ENCODE measurements at regions of chr7 and their contacts with region 1.

Region 1: DNA sequence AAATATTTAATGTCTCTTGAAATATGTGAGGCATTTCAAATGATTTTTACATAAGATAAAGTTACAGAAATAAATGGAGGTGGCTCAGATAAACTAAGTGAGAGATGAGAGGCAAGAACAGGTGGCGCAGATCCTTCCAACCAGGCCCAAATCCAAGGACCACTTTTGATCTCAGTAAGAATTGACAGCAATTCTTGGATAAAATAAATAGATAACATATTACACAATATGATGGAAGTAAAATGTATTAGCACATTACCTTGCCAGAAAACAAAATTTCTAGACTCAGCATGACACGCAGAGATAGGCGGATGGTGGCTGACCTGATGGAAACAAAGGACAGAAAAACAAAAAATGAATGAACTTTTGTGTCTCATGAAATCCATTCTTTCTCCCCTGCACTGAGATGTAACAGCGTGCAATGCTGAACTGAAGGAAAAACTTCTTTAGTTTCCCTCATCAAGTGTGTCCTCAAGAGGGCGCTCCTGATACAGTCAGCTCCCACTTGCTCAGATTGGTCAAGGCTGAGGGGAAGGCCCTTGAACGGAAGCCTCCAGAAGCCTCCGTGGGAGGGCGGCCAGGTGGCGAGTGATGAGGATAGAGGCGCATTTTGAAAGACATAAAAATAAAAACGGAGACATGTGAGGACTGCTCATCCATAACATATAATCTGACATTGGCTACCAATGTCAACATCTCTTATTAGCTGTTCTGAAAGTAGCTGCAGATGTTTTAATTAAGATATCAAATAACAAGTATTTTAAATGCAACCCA is 62.8 kb upstream of the GSDME start:
- DNase-seq: peak; percentile 9
- H3K4me3 ChIP-seq: no peak overlapping the region
- H3K27ac ChIP-seq: peak overlapping the region; percentile 17 to 94 (median 88)
- H3K4me1 ChIP-seq: peaks cover 8 to 31% (median 21%) of the 10 kb centered on the region in 3 donors
- H3K27me3 ChIP-seq: no peaks in the 10 kb centered on the region
- CTCF ChIP-seq: peak; percentile 80 to 90 (median 88)
- POLR2A ChIP-seq: no peak

Region 2: GRCh38 chr7:24336461-24336860 is 483.6 kb before region 1 on chr7:
- intact Hi-C with region 1: no loop called
- DNase-seq: no peak
- H3K4me3 ChIP-seq: no peak overlapping the region
- H3K27ac ChIP-seq: no peak overlapping the region
- H3K4me1 ChIP-seq: no peaks in the 10 kb centered on the region
- H3K27me3 ChIP-seq: peaks cover 0 to 12% (median 0%) of the 10 kb centered on the region in 4 donors
- CTCF ChIP-seq: no peak
- POLR2A ChIP-seq: no peak

Region 3: DNA sequence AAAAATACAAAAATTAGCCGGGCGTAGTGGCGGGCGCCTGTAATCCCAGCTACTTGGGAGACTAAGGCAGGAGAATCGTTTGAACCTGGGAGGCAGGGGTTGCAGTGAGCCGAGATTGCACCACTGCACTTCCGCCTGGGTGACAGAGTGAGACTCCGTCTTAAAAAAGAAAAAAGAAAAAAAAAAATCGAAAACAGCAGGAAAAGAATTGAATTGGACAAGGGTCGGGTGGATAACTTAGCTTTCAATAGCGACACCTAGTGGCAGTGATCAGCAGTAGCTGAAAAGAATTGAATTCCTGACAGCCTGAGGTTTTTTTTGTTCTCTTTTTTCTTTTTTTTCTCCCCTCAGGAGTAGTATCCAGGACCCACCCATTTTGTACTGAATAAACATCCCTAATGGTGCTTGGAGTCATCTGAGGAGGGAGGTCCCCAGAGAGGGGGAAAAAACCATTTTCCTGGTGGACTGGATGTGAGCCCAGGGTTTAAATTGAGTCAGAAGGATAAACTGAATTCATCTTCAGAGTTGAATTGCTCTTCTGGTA is 249.9 kb after region 1 on chr7:
- intact Hi-C with region 1: loop called (anchors 2 kb)
- DNase-seq: no peak
- H3K4me3 ChIP-seq: peak overlapping the region in 3 of 4 donors; percentile 34 to 55 (median 39)
- H3K27ac ChIP-seq: no peak overlapping the region
- H3K4me1 ChIP-seq: peaks cover 0 to 12% (median 3%) of the 10 kb centered on the region in 3 donors
- H3K27me3 ChIP-seq: no peaks in the 10 kb centered on the region
- CTCF ChIP-seq: peak; percentile 74 to 85 (median 83)
- POLR2A ChIP-seq: no peak

Region 4: DNA sequence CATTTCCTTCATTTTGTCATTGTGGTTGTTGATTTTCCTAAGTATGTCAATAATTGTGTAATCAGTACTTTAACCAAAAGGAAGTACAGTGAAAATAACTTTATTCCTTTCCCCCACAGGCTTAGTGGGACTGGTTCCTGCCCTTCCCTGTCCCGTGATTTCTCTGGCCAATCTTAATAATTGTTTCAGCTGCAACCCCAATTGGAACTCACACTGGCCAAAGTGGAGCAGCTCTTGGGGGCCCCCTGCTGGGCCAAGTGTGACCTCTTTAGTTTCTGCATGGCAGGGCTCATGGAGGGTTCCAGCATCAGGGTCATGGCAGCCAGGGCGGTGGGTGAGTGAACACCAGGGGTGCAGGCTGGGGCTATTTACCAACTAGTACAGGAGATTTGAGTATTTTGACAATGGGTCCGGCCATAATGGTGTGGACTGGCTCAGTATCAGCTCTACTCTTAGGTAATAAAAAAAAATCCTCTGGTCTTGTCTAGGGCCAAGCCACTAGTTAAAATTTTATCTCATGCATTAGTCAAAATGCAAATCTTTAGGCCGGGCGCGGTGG is 273.2 kb after region 1 on chr7:
- intact Hi-C with region 1: loop called (anchors 10 kb)
- DNase-seq: peak; percentile 3
- H3K4me3 ChIP-seq: no peak overlapping the region
- H3K27ac ChIP-seq: no peak overlapping the region
- H3K4me1 ChIP-seq: peaks cover 0 to 12% (median 0%) of the 10 kb centered on the region in 3 donors
- H3K27me3 ChIP-seq: no peaks in the 10 kb centered on the region
- CTCF ChIP-seq: peak; percentile 39 to 80 (median 74)
- POLR2A ChIP-seq: no peak

Measured in esophagus squamous epithelium (tissue), 5 donors.